Common myeloid progenitor, CD34-positive (primary cell): ENCODE measurements at regions of chr19 and their contacts with region 1.

Region 1: DNA sequence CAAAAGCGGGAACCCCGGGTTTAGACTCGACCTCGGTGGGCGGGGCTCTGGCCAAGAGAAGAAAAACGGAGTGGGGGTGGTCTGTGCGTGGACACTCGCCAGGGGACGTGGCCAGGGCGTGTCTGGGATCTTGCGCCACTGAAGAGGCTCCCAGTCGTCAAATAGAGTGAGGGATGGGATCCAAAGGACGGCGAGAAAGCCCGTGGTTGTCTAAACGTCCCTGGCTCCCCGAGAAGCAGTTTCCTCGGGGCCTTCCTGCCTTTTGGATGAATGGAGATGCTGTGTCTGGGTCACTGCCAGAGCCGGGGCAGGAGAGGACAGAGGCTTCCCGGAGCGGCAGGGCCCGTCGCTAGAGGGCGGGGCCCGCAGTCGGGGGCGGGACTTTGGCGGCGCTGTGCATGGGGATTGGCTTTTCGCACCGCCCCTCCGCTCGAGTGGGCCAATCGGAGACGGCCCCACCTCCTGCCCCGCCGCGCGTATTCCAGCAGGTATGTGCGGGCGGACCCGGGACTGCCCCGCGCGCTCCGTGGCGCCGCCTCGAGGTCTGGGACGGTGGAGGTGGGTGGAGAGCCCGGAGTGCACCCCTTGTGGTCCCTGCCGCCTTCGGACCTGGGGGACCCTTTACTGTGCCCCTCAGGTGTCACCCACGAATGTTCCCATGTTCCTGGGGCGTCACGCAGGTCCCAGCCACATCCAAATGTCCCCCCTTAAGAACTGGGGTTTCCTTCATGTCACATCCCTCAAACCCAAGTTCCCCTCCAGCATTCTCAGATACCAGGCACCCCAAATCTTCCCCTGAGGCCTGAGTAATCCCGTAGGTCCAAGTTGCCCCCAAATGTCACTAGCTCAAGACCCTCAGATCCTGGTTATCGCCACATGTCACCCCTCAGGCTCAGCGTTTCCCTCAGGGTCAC is 38.3 kb downstream of the ZSWIM4 start:
- DNase-seq: peak; percentile 92 to 96 (median 95)
- H3K4me3 ChIP-seq: peak overlapping the region; percentile 17 to 64 (median 34)
- H3K27ac ChIP-seq: peak overlapping the region; percentile 34 to 76
- H3K4me1 ChIP-seq: peaks cover 8 to 56% (median 53%) of the 10 kb centered on the region in 4 experiments
- H3K27me3 ChIP-seq: no peaks in the 10 kb centered on the region

Region 2: DNA sequence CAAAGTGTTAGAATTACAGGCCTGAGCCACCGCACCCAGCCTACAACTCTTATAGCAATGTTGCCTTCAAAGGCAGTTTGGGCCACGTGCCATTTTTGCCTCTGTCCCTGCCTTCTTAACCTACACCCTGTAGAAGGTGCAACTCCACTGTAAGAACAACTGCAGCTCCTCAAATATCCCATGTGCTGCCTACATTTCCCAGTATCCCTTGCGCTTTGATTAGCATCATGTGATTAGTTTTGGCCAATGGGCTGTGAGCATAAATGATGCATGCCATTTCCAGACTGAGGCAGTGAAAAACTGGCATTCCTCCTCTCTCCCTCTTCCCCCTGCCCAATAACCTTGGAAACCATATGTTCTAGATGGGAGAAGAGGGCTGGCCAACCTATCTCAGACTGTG is 144.5 kb before region 1 on chr19:
- CTCF ChIA-PET with region 1: no interaction called
- POLR2A ChIA-PET with region 1: no interaction called
- DNase-seq: peak in 2 of 3 donors; percentile 38 to 40
- H3K4me3 ChIP-seq: no peak overlapping the region
- H3K27ac ChIP-seq: no peak overlapping the region
- H3K4me1 ChIP-seq: peaks cover 0 to 6% (median 4%) of the 10 kb centered on the region in 4 experiments
- H3K27me3 ChIP-seq: peaks cover 0 to 10% (median 4%) of the 10 kb centered on the region in 5 experiments

Region 3: DNA sequence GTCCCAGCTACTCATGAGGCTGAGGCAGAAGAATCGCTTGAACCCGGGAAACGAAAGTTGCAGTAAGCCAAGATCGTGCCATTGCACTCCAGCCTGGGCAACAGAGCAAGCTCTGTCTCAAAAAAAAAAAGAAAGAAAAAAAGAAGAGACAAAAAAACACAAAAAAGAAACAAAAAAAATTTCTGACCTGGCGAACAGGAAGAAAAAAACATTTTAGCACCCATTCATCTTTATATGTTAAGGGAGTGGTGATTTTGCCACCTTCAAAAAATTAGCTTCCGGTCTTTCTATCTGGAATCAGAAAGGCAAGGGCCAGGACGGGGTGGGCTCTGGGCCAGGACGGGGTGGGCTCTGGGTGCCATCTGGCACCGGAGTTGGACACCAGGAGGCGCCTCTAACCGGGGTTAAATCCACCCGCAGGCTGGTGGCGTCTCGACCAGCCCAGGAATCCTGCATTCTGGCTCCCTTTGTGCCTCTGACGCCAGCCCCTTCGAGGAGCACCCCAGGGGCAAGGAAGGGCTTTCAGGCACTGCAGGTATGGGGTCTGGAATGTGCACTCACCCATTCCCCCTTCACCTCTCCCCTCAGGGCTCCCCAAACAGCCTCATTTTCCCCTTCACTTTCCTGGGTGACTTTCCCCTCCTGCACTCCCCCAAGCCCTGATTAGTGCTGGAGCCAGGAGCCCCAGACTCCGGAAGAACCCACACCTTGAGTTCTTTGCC is 48.7 kb before region 1 on chr19:
- CTCF ChIA-PET with region 1: interaction called, 14 read pairs
- POLR2A ChIA-PET with region 1: interaction called, 16 read pairs
- DNase-seq: peak; percentile 70 to 78 (median 75)
- H3K4me3 ChIP-seq: peak overlapping the region in 1 of 7 experiments; percentile 38
- H3K27ac ChIP-seq: no peak overlapping the region
- H3K4me1 ChIP-seq: peaks cover 2 to 42% (median 37%) of the 10 kb centered on the region in 4 experiments
- H3K27me3 ChIP-seq: no peaks in the 10 kb centered on the region

Region 4: GRCh38 chr19:13794757-13795589 is 38.6 kb before region 1 on chr19 and contains the start of gene ZSWIM4:
- CTCF ChIA-PET with region 1: interaction called, 6 read pairs
- POLR2A ChIA-PET with region 1: interaction called, 14 read pairs
- DNase-seq: peak; percentile 98 to 99 (median 99)
- H3K4me3 ChIP-seq: peak within 1 kb of the TSS; percentile 70 to 94 (median 81)
- H3K27ac ChIP-seq: peak within 1 kb of the TSS; percentile 50 to 86
- H3K4me1 ChIP-seq: peaks cover 10 to 40% (median 26%) of the 10 kb centered on the region in 4 experiments
- H3K27me3 ChIP-seq: no peaks in the 10 kb centered on the region

Region 5: DNA sequence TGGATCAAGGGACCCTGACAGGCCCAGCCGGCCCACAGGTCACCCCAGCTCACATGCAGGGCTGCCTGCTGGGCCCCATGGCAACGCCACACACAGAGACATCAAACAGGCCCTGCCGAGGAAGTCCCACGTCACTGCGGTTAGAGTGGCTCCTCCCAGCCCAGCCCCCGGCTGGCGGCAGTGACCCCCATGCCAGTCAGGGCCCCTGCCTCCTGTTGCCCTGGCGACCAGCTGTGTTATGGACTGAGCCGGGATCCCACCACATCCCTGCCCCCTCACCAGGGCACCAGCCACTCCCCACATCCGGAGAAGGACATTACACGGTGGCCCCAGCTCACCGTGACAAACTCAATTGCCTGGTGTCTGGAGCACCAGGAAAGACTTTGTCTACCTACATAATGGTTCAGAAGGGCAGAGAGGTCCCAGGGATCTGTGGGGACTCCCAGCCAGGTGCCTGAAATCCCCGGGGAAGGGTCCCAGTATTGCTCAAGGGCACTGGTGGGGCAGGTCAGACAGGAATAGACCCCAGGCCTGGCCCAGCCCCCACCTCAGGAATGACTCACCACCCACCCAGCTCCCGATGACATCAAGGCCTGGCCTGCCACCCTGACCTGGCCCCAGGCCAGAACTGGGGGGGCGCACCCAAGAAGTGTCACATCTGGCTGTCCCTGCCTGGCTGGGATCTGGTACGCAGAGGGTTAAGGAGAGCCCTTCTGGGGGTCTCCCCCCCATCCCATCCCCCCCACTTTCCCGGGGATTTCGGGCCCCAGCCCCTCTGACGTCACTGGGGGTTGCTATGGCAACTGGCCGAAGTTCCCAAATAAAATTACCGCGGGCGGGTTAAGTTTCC is 13.2 kb after region 1 on chr19:
- CTCF ChIA-PET with region 1: interaction called, 15 read pairs
- POLR2A ChIA-PET with region 1: interaction called, 230 read pairs
- DNase-seq: peak; percentile 99 to 100 (median 99)
- H3K4me3 ChIP-seq: peak overlapping the region; percentile 23 to 73 (median 54)
- H3K27ac ChIP-seq: peak overlapping the region; percentile 100
- H3K4me1 ChIP-seq: peaks cover 8 to 81% (median 75%) of the 10 kb centered on the region in 4 experiments
- H3K27me3 ChIP-seq: no peaks in the 10 kb centered on the region

Region 6: DNA sequence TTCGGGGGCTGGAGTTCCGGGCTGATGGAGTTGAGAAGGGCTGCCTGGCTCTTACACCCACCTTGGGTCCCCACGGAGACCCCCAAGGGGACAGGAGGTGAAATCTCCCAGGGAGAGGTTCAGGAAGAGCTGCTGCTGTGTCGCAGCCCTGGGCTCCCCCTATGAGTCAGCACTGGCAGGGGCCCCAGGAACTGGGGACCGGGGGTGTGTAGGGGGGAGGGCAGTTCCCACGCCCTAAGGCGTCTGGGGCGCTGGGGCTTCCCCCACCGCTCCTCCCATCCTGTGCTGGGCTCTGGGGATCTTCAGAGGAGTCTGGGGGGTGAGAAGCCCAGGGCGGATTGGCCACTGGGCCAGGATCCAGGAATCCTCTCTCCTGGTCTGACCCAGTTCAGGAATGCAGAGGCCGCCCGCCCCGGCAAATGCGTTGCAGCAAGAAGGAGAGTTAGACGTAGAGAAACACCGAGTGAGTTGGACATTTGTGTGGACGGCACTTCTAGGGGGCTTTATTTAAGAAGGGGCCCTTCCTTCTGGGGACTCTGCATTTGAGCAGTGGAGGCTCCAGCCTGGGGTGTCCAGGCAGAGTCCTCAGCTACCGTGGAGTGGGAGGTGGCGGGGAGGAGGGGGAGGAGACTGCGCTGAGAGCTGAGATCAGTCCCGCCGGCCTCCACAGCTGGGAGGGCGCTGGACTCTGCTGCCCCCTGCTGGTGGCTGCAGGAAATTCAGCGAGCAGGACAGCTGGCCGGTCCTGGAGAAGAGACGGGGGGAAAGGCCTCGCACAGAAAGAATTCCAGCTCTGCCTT is 28.3 kb after region 1 on chr19:
- CTCF ChIA-PET with region 1: interaction called, 147 read pairs
- POLR2A ChIA-PET with region 1: interaction called, 555 read pairs
- DNase-seq: peak; percentile 83 to 94 (median 93)
- H3K4me3 ChIP-seq: peak overlapping the region; percentile 40 to 88 (median 67)
- H3K27ac ChIP-seq: peak overlapping the region; percentile 94 to 96
- H3K4me1 ChIP-seq: peaks cover 3 to 51% (median 43%) of the 10 kb centered on the region in 4 experiments
- H3K27me3 ChIP-seq: no peaks in the 10 kb centered on the region

Region 7: DNA sequence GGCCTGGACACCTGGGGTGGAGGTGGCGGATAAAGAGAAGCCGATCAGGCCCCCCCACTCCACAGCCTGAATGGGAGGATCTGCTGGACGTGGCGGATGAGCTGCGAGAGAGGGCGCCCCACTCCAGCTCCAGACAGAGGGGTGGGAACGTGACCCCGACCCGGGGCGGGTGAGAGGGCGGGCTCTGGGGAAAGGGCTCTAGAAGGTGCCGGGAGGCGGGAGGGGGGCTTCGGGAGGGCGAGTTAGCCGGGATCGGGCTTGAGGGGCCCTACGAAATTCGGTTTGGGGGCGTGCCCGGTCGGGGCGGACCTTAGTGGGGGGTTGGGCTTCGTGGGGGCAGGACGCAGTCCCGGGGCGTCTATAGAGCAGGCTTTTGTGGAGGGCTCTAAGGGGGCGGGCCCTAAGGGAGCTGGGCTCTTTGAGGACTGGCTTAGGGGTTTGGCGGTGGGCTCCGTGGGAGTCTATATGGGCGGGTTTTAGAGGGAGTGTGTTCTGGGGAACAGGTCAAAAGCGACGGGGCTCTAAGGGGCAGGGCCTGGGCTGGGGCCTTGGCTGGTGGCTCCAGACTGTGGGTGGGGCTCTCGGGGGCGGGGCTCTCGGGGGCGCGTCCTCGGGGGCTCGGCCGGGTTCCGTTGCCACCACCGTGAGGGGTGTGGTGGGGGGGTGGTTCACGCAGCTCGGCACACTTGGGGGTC is 39.3 kb after region 1 on chr19:
- CTCF ChIA-PET with region 1: no interaction called
- POLR2A ChIA-PET with region 1: interaction called, 555 read pairs
- DNase-seq: peak; percentile 85 to 94 (median 92)
- H3K4me3 ChIP-seq: peak overlapping the region; percentile 18 to 76 (median 48)
- H3K27ac ChIP-seq: peak overlapping the region in 1 of 2 experiments; percentile 49
- H3K4me1 ChIP-seq: peaks cover 0 to 23% (median 15%) of the 10 kb centered on the region in 4 experiments
- H3K27me3 ChIP-seq: no peaks in the 10 kb centered on the region

Region 8: GRCh38 chr19:13938301-13939064 is 104.9 kb after region 1 on chr19 and contains the start of gene PODNL1:
- CTCF ChIA-PET with region 1: no interaction called
- POLR2A ChIA-PET with region 1: no interaction called
- DNase-seq: peak in 2 of 3 donors; percentile 47 to 51
- H3K4me3 ChIP-seq: no peak within 1 kb of the TSS
- H3K27ac ChIP-seq: no peak within 1 kb of the TSS
- H3K4me1 ChIP-seq: peaks cover 0 to 30% (median 15%) of the 10 kb centered on the region in 4 experiments
- H3K27me3 ChIP-seq: peaks cover 0 to 11% (median 2%) of the 10 kb centered on the region in 5 experiments